ENCODE measurements at regions of chr11 and their contacts with region 1.

Region 1: DNA sequence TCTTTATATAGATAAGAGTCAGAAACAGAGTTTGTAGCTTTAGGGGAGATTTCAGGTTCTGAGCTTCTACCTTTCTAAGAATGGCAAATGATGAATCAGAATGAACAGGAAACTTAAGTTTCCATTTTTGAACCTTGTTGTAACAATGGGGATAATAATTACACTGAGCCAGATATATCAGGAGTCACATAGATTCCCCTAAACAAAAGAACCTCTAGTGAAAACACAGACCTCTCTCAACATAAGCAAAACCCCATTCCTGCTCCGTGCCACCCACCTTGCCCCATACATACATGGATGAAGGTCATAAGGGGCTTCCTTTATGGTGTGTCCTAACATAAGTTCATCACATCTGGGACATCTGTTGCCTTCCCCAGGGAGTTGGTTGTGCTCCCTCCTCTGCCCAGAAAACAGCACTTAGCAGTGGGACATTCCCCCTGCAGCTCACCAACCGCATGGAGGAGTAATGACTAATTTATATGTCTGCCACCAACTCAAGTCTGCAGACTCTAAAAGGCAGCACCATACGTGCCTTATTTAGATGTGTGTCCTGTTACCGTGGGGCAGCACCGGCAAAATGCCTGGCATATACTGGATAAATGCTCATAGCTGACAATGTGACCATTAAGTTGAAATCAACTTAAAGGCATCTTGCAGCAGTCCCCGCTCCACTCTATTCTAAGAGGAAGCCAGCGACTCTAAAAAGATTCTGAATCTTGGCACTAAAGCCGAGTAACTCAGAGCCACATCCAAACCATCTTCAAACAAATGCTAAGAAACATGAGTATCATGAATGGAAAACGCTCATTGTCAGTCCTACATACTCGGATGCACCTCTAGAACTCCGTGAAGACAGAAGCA is 8.0 kb downstream of the JAML start:
- DNase-seq: peak; percentile 83
- H3K4me3 Mint-ChIP-seq: peak overlapping the region; percentile 64
- H3K27ac Mint-ChIP-seq: peak overlapping the region; percentile 100
- H3K4me1 Mint-ChIP-seq: peaks cover 94% of the 10 kb centered on the region
- H3K27me3 Mint-ChIP-seq: no peaks in the 10 kb centered on the region

Region 2: GRCh38 chr11:117597071-117597470 is 619.8 kb before region 1 on chr11:
- CTCF ChIA-PET with region 1: no interaction called
- intact Hi-C with region 1: no loop called
- DNase-seq: peak; percentile 76
- H3K4me3 Mint-ChIP-seq: no peak overlapping the region
- H3K27ac Mint-ChIP-seq: no peak overlapping the region
- H3K4me1 Mint-ChIP-seq: no peaks in the 10 kb centered on the region
- H3K27me3 Mint-ChIP-seq: peaks cover 15% of the 10 kb centered on the region

Region 3: GRCh38 chr11:118002541-118003423 is 214.1 kb before region 1 on chr11:
- CTCF ChIA-PET with region 1: no interaction called
- intact Hi-C with region 1: loop called (anchors 5 kb)
- DNase-seq: peak; percentile 73
- H3K4me3 Mint-ChIP-seq: no peak overlapping the region
- H3K27ac Mint-ChIP-seq: peak overlapping the region; percentile 80
- H3K4me1 Mint-ChIP-seq: peaks cover 68% of the 10 kb centered on the region
- H3K27me3 Mint-ChIP-seq: no peaks in the 10 kb centered on the region

Region 4: DNA sequence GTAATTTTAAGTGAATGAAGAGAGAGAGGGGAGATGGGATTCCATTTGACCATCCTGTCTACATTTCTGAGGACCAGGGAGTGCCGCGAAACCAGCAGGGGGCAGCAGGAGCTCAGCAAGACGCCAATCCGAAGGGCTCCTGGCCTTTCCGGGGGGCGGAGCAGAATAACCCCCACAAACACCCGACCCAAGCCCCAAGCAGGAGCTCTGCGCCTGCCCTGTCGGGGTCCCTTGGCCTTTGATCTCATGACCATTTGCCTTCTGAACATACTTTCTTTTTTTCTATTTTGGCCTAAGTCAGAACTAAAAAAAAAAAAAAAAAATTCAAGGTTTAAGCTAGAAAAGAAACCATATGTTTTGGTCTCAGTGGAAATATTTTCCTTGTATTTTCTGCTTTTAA is 18.5 kb before region 1 on chr11:
- CTCF ChIA-PET with region 1: interaction called, 15 read pairs
- intact Hi-C with region 1: loop called (anchors 1 kb)
- DNase-seq: peak; percentile 88
- H3K4me3 Mint-ChIP-seq: no peak overlapping the region
- H3K27ac Mint-ChIP-seq: peak overlapping the region; percentile 69
- H3K4me1 Mint-ChIP-seq: peaks cover 12% of the 10 kb centered on the region
- H3K27me3 Mint-ChIP-seq: no peaks in the 10 kb centered on the region

Region 5: DNA sequence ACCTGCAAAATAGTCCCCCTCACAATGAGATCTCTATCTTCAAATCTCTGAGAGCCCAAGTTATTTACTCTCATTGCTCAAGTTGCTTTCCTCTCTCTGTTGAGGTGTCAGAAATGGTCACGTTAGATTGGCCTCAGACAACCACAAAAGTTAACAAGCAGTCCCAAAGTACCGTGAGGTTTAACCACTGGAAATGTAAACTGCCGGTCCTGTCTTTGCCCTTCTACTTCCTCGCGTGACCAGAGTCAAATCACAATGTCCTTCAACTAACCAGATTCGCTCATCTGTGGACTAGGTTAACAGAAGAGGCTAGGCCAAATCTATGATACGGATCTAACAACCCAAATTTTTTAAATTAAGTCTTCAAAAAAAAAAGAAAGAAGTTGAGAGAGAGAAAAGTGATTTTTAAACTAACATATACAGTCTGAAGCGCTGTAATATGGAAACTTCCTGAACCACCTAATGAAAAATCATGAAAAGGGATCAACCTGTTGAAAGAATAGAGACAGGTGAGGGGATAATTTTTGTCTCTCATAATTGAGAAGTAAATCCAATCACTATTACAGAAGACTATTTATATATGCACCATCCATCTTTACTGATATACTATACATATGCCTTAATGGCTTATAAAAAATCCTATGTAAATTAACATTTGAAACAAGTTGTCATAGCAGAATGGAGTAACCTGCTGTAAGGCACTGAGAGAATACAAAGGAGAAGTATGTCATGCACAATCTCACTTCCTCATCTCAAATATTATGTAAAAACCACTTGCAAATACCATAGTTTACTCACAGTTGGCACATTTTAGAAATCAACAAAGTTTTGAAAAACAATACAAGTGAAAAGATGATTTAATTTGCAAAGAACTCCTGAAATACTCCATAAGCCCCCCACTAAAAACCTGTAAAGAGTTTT is 11.3 kb after region 1 on chr11:
- CTCF ChIA-PET with region 1: interaction called, 9 read pairs
- intact Hi-C with region 1: loop called (anchors 1 kb)
- DNase-seq: peak; percentile 30
- H3K4me3 Mint-ChIP-seq: peak overlapping the region; percentile 3
- H3K27ac Mint-ChIP-seq: peak overlapping the region; percentile 89
- H3K4me1 Mint-ChIP-seq: peaks cover 20% of the 10 kb centered on the region
- H3K27me3 Mint-ChIP-seq: no peaks in the 10 kb centered on the region

Region 6: GRCh38 chr11:118251858-118252652 is 35.2 kb after region 1 on chr11 and contains the start of gene MPZL3:
- CTCF ChIA-PET with region 1: interaction called, 5 read pairs
- intact Hi-C with region 1: loop called (anchors 1 kb)
- DNase-seq: peak; percentile 93
- H3K4me3 Mint-ChIP-seq: peak within 1 kb of the TSS; percentile 98
- H3K27ac Mint-ChIP-seq: peak within 1 kb of the TSS; percentile 99
- H3K4me1 Mint-ChIP-seq: peaks cover 39% of the 10 kb centered on the region
- H3K27me3 Mint-ChIP-seq: no peaks in the 10 kb centered on the region
- total RNA-seq, gene MPZL3: 29.3 to 30.5 TPM

Region 7: GRCh38 chr11:118401151-118401878 is 184.5 kb after region 1 on chr11 and contains the start of gene ATP5MG:
- CTCF ChIA-PET with region 1: no interaction called
- intact Hi-C with region 1: loop called (anchors 2 kb)
- DNase-seq: peak; percentile 97
- H3K4me3 Mint-ChIP-seq: peak within 1 kb of the TSS; percentile 95
- H3K27ac Mint-ChIP-seq: peak within 1 kb of the TSS; percentile 98
- H3K4me1 Mint-ChIP-seq: peaks cover 58% of the 10 kb centered on the region
- H3K27me3 Mint-ChIP-seq: no peaks in the 10 kb centered on the region
- total RNA-seq, gene ATP5MG: 279 to 284 TPM

Measured in activated naive CD4-positive, alpha-beta T cell treated with anti-CD3 and anti-CD28 coated beads for 36 hours (primary cell).